Heart right ventricle (tissue), 16 donors: ENCODE measurements at regions of chr2 and their contacts with region 1.

Region 1: GRCh38 chr2:133415210-133415876 is 152.9 kb downstream of the NCKAP5 start:
- DNase-seq: peak; percentile 15 to 20
- ATAC-seq: peak; percentile 67 to 96 (median 91)
- H3K4me3 ChIP-seq: no peak overlapping the region
- H3K27ac ChIP-seq: peak overlapping the region in 3 of 10 donors; percentile 18 to 28 (median 21)
- H3K4me1 ChIP-seq: peaks cover 0 to 28% (median 19%) of the 10 kb centered on the region in 9 donors
- H3K27me3 ChIP-seq: no peaks in the 10 kb centered on the region
- CTCF ChIP-seq: no peak

Region 2: DNA sequence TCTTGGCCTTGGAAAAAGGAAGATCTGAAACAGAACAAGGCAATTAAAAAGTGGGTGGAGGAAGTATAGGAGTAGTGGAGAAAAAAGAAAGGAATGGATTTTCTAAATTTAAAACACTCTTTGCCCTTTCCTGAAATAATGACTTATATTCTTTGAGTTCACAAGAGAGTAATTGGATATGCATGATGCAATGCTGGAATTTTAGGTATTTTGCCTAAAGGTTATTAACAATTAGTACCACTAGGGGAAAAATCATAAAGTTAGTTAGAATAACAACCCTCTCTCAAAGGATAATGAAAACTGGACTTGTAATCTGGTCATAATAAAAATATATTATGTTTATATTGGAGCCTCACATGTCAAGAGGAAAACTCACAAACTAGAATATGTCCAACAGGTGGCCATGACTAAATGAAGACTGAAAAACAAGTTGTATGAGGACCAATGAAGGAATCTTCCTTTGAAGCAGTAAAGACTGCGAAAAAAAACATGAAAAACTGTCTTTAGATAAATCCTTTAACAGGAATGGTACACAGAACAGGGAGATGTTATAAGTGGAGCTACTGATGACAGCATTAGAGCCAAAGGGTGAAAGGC is 128.9 kb before region 1 on chr2:
- intact Hi-C with region 1: loop called in 1 of 10 experiments (anchors 10 kb)
- DNase-seq: no peak
- ATAC-seq: no peak
- H3K4me3 ChIP-seq: no peak overlapping the region
- H3K27ac ChIP-seq: no peak overlapping the region
- H3K4me1 ChIP-seq: no peaks in the 10 kb centered on the region
- H3K27me3 ChIP-seq: no peaks in the 10 kb centered on the region
- CTCF ChIP-seq: no peak